ENCODE measurements at regions of chrX and their contacts with region 1.

Region 1: GRCh38 chrX:77899081-77899828 is at the start of gene COX7B:
- DNase-seq: peak in 1 of 2 donors; percentile 82
- H3K4me3 ChIP-seq: peak within 1 kb of the TSS; percentile 60 to 69
- H3K27ac ChIP-seq: peak within 1 kb of the TSS; percentile 79 to 82
- H3K4me1 ChIP-seq: peaks cover 0 to 3% of the 10 kb centered on the region in 2 donors
- H3K27me3 ChIP-seq: no peaks in the 10 kb centered on the region
- CTCF ChIP-seq: peak in 2 of 3 experiments; percentile 22 to 40
- total RNA-seq, gene COX7B: 472 TPM

Region 2: GRCh38 chrX:76427560-76428242 is 1471.6 kb before region 1 on chrX and contains the start of gene MAGEE1:
- intact Hi-C with region 1: loop called (anchors 10 kb)
- DNase-seq: peak; percentile 44 to 84
- H3K4me3 ChIP-seq: peak within 1 kb of the TSS; percentile 65 to 88
- H3K27ac ChIP-seq: peak within 1 kb of the TSS; percentile 53 to 56
- H3K4me1 ChIP-seq: no peaks in the 10 kb centered on the region
- H3K27me3 ChIP-seq: no peaks in the 10 kb centered on the region
- CTCF ChIP-seq: no peak
- total RNA-seq, gene MAGEE1: 4.5 TPM

Region 3: GRCh38 chrX:77785486-77786364 is 113.5 kb before region 1 on chrX and contains the start of gene ATRX:
- intact Hi-C with region 1: loop called (anchors 2 kb)
- DNase-seq: peak; percentile 15 to 84
- H3K4me3 ChIP-seq: peak within 1 kb of the TSS; percentile 60 to 82
- H3K27ac ChIP-seq: peak within 1 kb of the TSS; percentile 90 to 93
- H3K4me1 ChIP-seq: no peaks in the 10 kb centered on the region
- H3K27me3 ChIP-seq: no peaks in the 10 kb centered on the region
- CTCF ChIP-seq: no peak
- total RNA-seq, gene ATRX: 117 TPM

Measured in ascending aorta (tissue), 2 donors.